ENCODE measurements at regions of chr2 and their contacts with region 1.

Region 1: DNA sequence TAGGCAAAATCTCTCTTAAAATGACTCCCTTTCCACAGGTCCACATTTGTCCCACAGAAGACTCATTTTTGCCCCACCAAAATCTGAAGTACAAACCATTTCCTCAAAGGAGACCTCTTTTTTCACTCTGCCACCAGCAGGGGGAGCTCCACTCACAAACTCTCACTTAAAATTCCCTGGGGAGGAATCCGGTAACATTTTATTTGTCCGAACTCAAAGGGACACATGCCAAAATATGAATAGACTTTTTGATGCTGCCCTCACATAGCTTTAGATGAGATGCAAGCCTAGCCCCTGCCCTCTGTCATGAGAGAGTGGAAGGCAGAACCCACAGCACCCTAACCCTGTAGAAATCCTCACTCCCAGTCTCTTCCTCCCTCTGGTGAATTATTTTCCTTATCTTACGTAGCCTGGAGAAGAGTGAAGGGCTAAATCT is 57.1 kb downstream of the RMDN2 start:
- DNase-seq: peak; percentile 66
- ATAC-seq: peak; percentile 35

Region 2: GRCh38 chr2:37688771-37689468 is 293.2 kb before region 1 on chr2:
- intact Hi-C with region 1: no loop called
- DNase-seq: no peak
- ATAC-seq: peak; percentile 68

Region 3: DNA sequence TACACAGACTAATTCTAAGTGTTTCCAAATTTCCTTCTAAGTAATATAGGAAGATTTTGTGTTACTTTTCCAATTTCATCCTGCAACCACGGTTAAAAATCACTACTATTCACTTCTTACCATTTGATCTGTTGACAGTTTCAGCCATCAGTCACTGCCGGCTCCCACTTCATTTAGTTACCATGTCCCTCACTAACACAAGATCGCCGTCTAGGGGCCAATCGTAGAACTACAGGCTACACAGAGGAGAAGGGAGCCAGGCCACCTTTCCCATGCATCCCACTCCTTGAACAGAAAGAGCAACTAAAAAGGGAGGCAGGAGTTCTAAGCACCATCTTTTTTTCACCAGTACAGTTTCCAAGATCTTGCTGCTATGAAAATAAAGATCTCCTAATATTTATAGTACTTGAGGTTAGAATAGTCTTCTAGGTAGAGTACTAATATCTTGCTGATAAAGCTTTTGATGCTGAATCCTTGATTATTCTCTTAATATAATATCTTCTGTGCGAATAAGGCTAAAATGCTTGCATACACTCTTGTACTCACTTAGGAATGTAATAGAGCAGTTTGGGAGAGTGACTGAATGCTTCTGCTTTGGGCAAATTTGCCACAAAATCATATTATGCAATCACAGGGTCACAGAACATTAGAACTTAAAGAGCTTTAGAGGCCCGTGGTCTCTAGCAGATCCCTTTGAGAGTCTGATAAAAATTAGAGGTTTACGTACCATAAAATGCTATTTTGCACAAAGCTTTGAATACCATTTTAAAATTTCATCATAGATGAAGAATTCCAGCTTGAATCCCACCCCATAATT is 133.3 kb after region 1 on chr2:
- intact Hi-C with region 1: loop called (anchors 5 kb)
- DNase-seq: peak; percentile 82
- ATAC-seq: peak; percentile 78

Region 4: DNA sequence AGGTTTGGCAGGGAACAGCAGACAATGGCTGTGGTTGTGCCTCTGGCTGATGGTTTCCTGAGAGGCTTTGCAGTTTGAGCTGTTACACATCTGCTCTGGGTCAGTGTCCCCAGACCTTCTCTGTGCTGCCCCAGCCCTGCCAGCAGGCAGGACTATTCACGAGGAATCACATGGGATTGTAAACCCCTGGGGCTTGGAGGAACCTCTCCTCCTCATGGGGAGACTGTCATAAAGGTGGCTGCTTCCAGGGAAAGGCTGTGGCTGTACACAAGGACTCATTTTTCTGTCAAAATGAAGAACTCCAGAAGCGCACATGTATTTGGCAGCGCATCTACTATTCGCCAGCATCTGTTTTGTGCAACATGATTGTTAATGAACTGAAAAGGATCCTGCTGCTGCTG is 236.4 kb after region 1 on chr2:
- intact Hi-C with region 1: no loop called
- DNase-seq: no peak
- ATAC-seq: peak; percentile 68

Region 5: GRCh38 chr2:38274286-38275276 is 292.4 kb after region 1 on chr2:
- intact Hi-C with region 1: loop called (anchors 2 kb)
- DNase-seq: no peak
- ATAC-seq: peak; percentile 63

Measured in left ventricle myocardium superior (tissue), 1 donor.